ENCODE measurements at regions of chr13 and their contacts with region 1.

Region 1: GRCh38 chr13:23707674-23708073 is 137.5 kb downstream of the TNFRSF19 start:
- DNase-seq: peak; percentile 24
- ATAC-seq: no peak; the same call in 1 of the 2 replicates
- H3K4me3 ChIP-seq: no peak overlapping the region
- H3K27ac ChIP-seq: no peak overlapping the region
- H3K4me1 ChIP-seq: no peaks in the 10 kb centered on the region
- H3K27me3 ChIP-seq: no peaks in the 10 kb centered on the region
- CTCF ChIP-seq: peak; percentile 15 to 39 (median 19); a peak in 3 of 6 replicates
- POLR2A ChIP-seq: no peak
- RAD21 ChIP-seq: peak; percentile 41

Region 2: DNA sequence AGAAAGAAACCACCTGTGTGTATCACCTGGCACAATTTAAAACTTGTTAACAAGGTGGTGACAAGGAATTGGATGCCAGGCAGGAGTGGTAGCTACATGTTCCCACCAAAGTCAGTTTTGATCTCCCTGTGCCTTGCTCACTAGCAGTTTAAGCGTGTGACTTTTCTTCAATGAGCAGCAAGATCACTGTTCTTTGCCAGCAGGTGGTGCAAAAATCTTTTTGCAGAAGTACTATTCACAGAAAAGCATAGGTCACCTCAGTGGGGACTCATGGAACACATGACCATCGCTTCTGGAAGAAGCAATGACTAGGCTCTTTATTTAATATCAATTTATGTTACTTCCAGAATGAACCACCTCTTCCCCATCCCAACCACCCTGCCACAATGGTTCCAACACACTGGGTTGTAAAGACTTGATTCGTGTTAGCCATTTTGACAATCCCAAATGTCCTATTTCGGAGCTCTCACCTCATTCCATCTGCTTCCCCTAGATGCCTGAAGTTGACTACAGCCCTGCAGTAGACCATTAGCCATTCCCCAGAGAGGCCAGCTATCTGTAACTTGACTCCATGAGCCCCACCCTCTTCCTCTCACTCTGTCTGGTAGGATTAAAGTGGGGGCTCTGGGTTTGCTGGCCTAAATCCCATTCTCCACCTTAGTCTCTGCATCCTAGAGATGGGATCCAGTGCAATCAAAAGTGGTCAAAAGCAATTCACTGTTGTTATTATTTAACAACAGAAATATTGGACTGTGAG is 196.5 kb before region 1 on chr13:
- CTCF ChIA-PET with region 1: no interaction called
- POLR2A ChIA-PET with region 1: no interaction called
- RAD21 ChIA-PET with region 1: no interaction called
- intact Hi-C with region 1: loop called (anchors 5 kb)
- DNase-seq: peak; percentile 6
- ATAC-seq: peak; percentile 60
- H3K4me3 ChIP-seq: no peak overlapping the region
- H3K27ac ChIP-seq: no peak overlapping the region
- H3K4me1 ChIP-seq: peaks cover 0 to 4% of the 10 kb centered on the region in 2 experiments; a peak in 1 of 4 replicates
- H3K27me3 ChIP-seq: peaks cover 1% of the 10 kb centered on the region
- CTCF ChIP-seq: peak in 2 of 3 experiments; percentile 15 to 39; a peak in 3 of 6 replicates
- POLR2A ChIP-seq: no peak
- RAD21 ChIP-seq: peak; percentile 38

Region 3: DNA sequence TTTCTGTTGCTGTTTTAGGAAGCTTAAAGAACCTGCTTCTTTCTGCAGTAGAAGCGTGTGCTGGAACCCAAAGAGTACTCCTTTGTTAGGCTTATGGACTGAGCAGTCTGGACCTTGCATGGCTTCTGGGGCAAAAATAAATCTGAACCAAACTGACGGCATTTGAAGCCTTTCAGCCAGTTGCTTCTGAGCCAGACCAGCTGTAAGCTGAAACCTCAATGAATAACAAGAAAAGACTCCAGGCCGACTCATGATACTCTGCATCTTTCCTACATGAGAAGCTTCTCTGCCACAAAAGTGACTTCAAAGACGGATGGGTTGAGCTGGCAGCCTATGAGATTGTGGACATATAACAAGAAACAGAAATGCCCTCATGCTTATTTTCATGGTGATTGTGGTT is 34.3 kb before region 1 on chr13:
- CTCF ChIA-PET with region 1: no interaction called
- POLR2A ChIA-PET with region 1: no interaction called
- RAD21 ChIA-PET with region 1: no interaction called
- intact Hi-C with region 1: no loop called
- DNase-seq: no peak
- ATAC-seq: no peak
- H3K4me3 ChIP-seq: no peak overlapping the region
- H3K27ac ChIP-seq: no peak overlapping the region
- H3K4me1 ChIP-seq: no peaks in the 10 kb centered on the region
- H3K27me3 ChIP-seq: peaks cover 20% of the 10 kb centered on the region; the same call in 1 of the 2 replicates
- CTCF ChIP-seq: no peak
- POLR2A ChIP-seq: no peak
- RAD21 ChIP-seq: no peak

Measured in HCT116 (cell line).